PC-9 (cell line): ENCODE measurements at regions of chr12 and their contacts with region 1.

Region 1: GRCh38 chr12:1605129-1606020 is 11.0 kb upstream of the FBXL14 start:
- DNase-seq: peak; percentile 74 to 83
- H3K4me3 ChIP-seq: peak overlapping the region; percentile 47
- H3K27ac ChIP-seq: peak overlapping the region; percentile 64
- H3K4me1 ChIP-seq: peaks cover 29% of the 10 kb centered on the region
- H3K27me3 ChIP-seq: no peaks in the 10 kb centered on the region
- CTCF ChIP-seq: peak; percentile 90

Region 2: DNA sequence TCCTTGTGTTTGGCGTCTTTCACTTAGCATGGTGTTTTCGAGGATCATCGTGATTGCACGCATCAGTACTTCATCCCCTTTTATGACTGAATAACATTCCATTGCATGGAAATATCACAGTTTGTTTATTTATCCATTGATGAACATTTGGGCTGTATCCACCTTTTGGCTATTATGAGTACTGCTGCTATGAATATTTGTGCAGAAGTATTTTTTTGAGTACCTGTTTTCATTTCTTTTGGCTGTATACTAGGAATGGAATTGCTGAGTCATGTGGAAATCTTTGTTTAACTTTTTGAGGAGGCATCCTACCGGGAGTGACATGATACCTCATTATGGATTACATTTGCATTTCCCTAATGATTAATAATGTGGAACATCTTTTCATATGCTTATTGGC is 786.6 kb before region 1 on chr12:
- CTCF ChIA-PET with region 1: no interaction called
- POLR2A ChIA-PET with region 1: no interaction called
- intact Hi-C with region 1: loop called (anchors 5 kb)
- DNase-seq: no peak
- H3K4me3 ChIP-seq: no peak overlapping the region
- H3K27ac ChIP-seq: no peak overlapping the region
- H3K4me1 ChIP-seq: peaks cover 17% of the 10 kb centered on the region
- H3K27me3 ChIP-seq: no peaks in the 10 kb centered on the region
- CTCF ChIP-seq: peak; percentile 20; the same call in 1 of the 2 replicates

Region 3: GRCh38 chr12:913919-914708 is 691.3 kb before region 1 on chr12:
- CTCF ChIA-PET with region 1: no interaction called
- POLR2A ChIA-PET with region 1: no interaction called
- intact Hi-C with region 1: loop called (anchors 5 kb)
- DNase-seq: peak in 1 of 2 experiments; percentile 40
- H3K4me3 ChIP-seq: no peak overlapping the region
- H3K27ac ChIP-seq: no peak overlapping the region
- H3K4me1 ChIP-seq: no peaks in the 10 kb centered on the region
- H3K27me3 ChIP-seq: no peaks in the 10 kb centered on the region
- CTCF ChIP-seq: no peak

Region 4: GRCh38 chr12:1529862-1530591 is 75.3 kb before region 1 on chr12:
- CTCF ChIA-PET with region 1: no interaction called
- POLR2A ChIA-PET with region 1: interaction called, 15 read pairs
- intact Hi-C with region 1: no loop called
- DNase-seq: peak in 1 of 2 experiments; percentile 41
- H3K4me3 ChIP-seq: no peak overlapping the region
- H3K27ac ChIP-seq: no peak overlapping the region
- H3K4me1 ChIP-seq: no peaks in the 10 kb centered on the region
- H3K27me3 ChIP-seq: peaks cover 35% of the 10 kb centered on the region
- CTCF ChIP-seq: no peak

Region 5: GRCh38 chr12:1562813-1563407 is 42.5 kb before region 1 on chr12:
- CTCF ChIA-PET with region 1: no interaction called
- POLR2A ChIA-PET with region 1: no interaction called
- intact Hi-C with region 1: no loop called
- DNase-seq: peak in 1 of 2 experiments; percentile 28
- H3K4me3 ChIP-seq: no peak overlapping the region
- H3K27ac ChIP-seq: no peak overlapping the region
- H3K4me1 ChIP-seq: no peaks in the 10 kb centered on the region
- H3K27me3 ChIP-seq: no peaks in the 10 kb centered on the region
- CTCF ChIP-seq: no peak

Region 6: DNA sequence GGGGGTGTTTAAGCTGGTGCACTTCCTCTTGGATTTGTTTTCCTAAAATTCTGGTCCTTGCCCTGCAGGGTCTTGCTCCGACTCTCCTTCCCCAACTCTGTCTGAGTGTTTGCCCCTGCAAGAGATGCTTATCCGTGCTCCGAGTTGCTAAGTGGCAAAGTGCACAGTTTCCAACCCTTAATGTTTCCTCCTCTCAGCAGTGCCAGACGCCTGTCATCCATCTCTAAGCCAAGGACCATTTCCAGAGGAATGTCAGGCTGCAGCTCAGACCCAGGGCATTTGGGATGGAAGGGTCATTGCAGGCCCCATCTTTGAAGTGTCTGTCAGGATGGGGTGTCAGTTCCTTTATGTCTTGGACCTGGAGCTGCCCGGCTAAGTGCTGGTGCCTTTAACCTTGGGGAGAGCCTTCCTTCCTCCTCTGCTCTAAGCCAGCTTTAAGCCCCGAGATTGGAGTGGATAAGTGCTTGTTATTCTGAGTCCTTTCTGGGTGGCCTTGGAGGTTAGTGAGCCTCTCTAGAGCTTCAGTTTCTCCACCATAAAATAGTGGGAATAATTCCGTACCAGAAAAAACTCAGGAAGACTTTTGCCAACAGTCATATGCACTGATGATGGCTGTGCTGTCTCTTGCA is 38.6 kb after region 1 on chr12:
- CTCF ChIA-PET with region 1: no interaction called
- POLR2A ChIA-PET with region 1: no interaction called
- intact Hi-C with region 1: no loop called
- DNase-seq: no peak
- H3K4me3 ChIP-seq: no peak overlapping the region
- H3K27ac ChIP-seq: no peak overlapping the region
- H3K4me1 ChIP-seq: no peaks in the 10 kb centered on the region
- H3K27me3 ChIP-seq: peaks cover 9% of the 10 kb centered on the region; the same call in 1 of the 2 replicates
- CTCF ChIP-seq: no peak

Region 7: DNA sequence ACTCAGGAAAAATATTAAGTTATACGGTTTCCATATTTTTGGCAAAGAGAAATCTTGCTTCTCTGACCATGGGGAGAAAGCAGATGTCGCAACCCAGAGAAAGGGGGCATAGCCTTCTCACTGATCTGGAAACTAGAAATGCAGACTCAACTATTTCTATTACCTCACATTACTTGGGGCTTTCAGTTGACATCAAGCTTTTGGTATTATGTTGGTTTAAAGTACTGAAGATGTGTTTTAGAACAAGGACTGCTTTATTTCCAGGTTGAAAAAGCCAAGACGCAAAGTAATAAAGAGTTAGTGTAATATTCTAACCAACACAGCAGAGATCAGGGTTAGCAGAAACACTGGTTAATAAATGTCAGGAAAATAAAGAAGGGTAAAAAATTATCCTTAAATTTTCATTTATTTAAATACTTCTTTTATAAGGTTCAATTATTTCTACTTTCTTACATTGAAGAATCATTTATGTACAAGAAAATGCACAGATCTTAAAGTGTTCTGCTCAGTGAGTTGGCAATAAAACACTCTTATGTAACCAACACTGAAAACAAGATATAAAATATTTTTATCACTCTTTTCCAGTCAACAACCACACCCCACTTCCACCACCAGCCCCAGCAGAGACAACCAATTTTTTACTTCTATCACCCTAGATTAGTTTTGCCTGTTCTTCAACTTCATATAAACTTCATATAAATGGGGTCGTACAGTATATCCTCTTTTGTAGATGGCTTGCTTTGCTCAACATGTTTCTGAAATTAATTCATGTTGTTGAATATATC is 372.9 kb after region 1 on chr12:
- CTCF ChIA-PET with region 1: no interaction called
- POLR2A ChIA-PET with region 1: no interaction called
- intact Hi-C with region 1: no loop called
- DNase-seq: no peak
- H3K4me3 ChIP-seq: no peak overlapping the region
- H3K27ac ChIP-seq: no peak overlapping the region
- H3K4me1 ChIP-seq: no peaks in the 10 kb centered on the region
- H3K27me3 ChIP-seq: no peaks in the 10 kb centered on the region
- CTCF ChIP-seq: no peak